Posterior vena cava (tissue), 2 donors: ENCODE measurements at regions of chr16 and their contacts with region 1.

Region 1: GRCh38 chr16:85365120-85365519 is 248.0 kb upstream of the GSE1 start:
- DNase-seq: no peak

Region 2: DNA sequence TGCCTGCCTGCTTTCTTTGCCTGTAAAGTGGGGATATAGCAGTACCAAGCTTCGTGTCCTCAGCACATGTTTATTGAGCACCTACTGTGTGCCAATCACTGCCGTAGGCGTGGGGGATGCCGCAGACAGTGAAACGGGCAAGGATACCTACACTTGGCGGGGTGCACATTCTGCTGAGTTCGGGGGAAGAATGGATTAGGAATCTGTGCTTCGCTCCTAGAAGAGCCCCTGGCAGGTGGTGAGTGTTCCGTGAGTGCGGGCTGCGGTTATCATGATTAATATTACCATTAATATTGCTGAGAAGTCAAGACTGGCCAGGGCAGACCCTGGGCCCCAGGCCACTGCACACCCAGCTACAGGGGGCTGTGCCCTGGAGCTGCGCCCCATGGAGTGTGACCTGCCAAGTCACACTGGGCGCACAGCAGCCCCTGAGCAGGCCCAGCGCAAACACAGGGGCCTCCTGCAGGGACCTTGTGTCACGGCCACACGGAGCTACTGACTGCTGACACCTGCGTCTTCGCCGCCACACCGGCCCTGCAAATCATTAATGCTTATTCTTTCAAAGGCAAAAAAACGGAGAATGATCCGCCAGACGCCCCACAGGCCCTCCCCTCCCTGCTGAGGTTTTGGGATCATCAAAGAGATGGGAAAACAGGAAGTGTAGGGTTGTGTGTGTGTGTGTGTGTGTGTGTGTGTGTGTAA is 34.6 kb after region 1 on chr16:
- intact Hi-C with region 1: loop called in 1 of 2 experiments (anchors 1 kb)
- DNase-seq: peak; percentile 32